CD8-positive, alpha-beta memory T cell (primary cell): ENCODE measurements at regions of chr19 and their contacts with region 1.

Region 1: GRCh38 chr19:38514812-38515633 is 81.5 kb downstream of the RYR1 start:
- DNase-seq: peak; percentile 61 to 83 (median 68)
- H3K4me3 ChIP-seq: no peak overlapping the region
- H3K4me3 Mint-ChIP-seq: peak overlapping the region in 2 of 7 donors; percentile 15 to 29
- H3K27ac ChIP-seq: no peak overlapping the region
- H3K27ac Mint-ChIP-seq: peak overlapping the region in 4 of 8 donors; percentile 0 to 25 (median 16)
- H3K4me1 ChIP-seq: peaks cover 5% of the 10 kb centered on the region
- H3K4me1 Mint-ChIP-seq: peaks cover 8 to 20% (median 18%) of the 10 kb centered on the region in 3 donors
- H3K27me3 ChIP-seq: no peaks in the 10 kb centered on the region
- H3K27me3 Mint-ChIP-seq: peaks cover 0 to 3% of the 10 kb centered on the region in 2 donors

Region 2: DNA sequence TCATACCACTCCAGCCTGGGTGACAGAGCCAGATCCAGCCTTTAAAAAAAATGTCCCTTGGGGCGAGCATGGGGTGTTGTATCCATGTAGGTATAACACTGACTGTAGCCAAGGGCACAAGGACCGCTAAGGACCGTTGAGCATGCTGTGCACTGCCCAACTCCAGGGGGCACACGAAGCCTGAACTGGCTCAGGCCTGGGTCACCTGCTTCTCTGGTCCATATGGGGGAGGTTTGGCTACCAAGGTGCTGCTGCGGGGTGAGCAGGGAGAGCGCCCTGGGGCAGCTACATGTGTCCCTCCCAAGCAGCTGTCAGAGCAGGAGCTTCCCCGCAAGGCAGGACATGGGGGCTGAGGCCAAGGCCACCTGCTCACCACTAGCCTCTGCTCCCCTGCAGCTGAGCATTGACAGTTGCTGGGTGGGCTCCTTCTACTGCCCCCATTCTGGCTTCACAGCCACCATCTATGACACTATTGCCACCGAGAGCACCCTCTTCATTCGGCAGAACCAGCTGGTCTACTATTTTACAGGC is 163.1 kb before region 1 on chr19:
- CTCF ChIA-PET with region 1: no interaction called
- POLR2A ChIA-PET with region 1: no interaction called
- DNase-seq: no peak
- H3K4me3 ChIP-seq: no peak overlapping the region
- H3K4me3 Mint-ChIP-seq: no peak overlapping the region
- H3K27ac ChIP-seq: no peak overlapping the region
- H3K27ac Mint-ChIP-seq: no peak overlapping the region
- H3K4me1 ChIP-seq: no peaks in the 10 kb centered on the region
- H3K4me1 Mint-ChIP-seq: no peaks in the 10 kb centered on the region
- H3K27me3 ChIP-seq: no peaks in the 10 kb centered on the region
- H3K27me3 Mint-ChIP-seq: peaks cover 3 to 5% of the 10 kb centered on the region in 2 donors

Region 3: DNA sequence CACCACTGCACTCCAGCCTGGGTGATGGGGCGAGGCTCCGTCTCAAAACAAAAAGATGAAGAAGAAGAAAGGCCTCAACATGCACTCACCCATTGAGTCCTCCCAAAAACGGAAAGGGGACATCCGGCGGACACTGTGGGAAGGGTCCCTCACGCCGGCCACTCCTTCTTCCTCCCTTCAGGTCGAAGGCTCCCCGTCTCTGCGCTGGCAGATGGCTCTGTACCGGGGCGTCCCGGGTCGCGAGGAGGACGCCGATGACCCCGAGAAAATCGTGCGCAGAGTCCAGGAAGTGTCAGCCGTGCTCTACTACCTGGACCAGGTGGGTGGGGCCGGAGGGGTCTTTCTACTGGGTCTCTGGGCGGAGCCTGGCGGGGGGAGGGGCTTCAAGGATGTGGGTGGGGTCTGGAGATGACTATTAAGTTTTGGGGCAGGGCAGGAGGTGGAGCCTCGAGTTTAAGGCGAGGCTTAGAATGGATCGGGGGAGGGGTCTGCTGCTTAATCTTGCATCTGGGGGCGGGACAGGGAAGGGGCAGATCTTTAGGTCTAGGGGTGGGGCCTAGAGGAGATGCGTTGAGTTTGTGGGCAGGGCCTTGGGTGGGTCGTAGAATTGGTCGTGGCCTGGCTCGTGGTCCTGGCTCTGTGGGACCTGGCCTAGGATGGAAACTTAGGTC is 12.6 kb after region 1 on chr19:
- CTCF ChIA-PET with region 1: interaction called, 13 read pairs
- POLR2A ChIA-PET with region 1: no interaction called
- DNase-seq: no peak
- H3K4me3 ChIP-seq: no peak overlapping the region
- H3K4me3 Mint-ChIP-seq: peak overlapping the region in 1 of 7 donors; percentile 55
- H3K27ac ChIP-seq: no peak overlapping the region
- H3K27ac Mint-ChIP-seq: no peak overlapping the region
- H3K4me1 ChIP-seq: no peaks in the 10 kb centered on the region
- H3K4me1 Mint-ChIP-seq: peaks cover 0 to 4% (median 2%) of the 10 kb centered on the region in 3 donors
- H3K27me3 ChIP-seq: no peaks in the 10 kb centered on the region
- H3K27me3 Mint-ChIP-seq: peaks cover 0 to 1% of the 10 kb centered on the region in 2 donors

Region 4: DNA sequence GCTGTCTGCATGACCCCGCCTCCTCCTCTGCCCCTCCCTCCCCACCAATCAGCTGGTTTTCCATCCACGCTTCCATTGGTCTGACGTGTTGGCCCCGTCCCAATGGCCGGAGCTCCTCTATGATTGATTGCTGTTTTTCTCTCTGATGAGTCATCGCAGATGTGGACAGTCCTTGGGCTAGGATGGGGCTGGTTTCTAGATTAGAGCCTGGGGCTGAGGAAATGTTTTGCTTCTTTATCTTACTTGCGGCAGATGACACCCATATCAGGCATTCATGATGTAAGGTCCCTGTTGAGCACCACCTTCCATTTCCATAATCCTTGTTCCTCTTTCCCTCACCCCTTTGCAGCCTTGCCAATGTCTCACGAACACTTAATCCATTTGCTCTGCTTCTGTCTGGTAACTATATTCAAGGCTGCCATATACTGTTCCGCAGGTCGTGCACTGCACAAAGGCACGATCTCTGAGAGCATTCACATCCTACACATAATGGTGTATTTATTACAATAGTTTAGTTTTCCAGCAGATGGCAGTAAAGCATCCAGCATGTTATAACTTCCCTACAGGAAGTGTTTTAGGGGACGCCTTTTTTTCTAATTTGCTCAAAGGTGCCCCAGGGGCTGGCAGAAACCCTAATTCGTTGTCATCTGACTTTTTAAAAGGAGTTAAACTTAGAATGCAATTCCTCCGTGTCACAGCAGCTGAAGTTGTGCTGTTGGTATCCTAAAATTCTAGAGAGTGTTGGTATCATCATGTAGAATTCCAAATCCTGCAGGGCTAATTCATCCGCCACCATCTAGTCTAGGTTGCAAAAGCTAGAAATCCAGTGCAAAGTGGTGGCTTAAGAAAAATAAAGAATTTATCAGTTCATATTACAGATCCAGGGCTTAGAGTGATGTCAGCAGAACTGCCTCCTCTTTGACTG is 29.3 kb after region 1 on chr19:
- CTCF ChIA-PET with region 1: interaction called, 10 read pairs
- POLR2A ChIA-PET with region 1: no interaction called
- DNase-seq: peak in 2 of 5 donors; percentile 55 to 60
- H3K4me3 ChIP-seq: peak overlapping the region; percentile 7
- H3K4me3 Mint-ChIP-seq: peak overlapping the region in 4 of 7 donors; percentile 12 to 42 (median 20)
- H3K27ac ChIP-seq: peak overlapping the region; percentile 41
- H3K27ac Mint-ChIP-seq: peak overlapping the region in 5 of 8 donors; percentile 2 to 84 (median 14)
- H3K4me1 ChIP-seq: peaks cover 19% of the 10 kb centered on the region
- H3K4me1 Mint-ChIP-seq: peaks cover 22 to 35% (median 34%) of the 10 kb centered on the region in 3 donors
- H3K27me3 ChIP-seq: no peaks in the 10 kb centered on the region
- H3K27me3 Mint-ChIP-seq: peaks cover 0 to 2% of the 10 kb centered on the region in 2 donors